Activated T-helper 1 cell treated with anti-CD3 and anti-CD28 coated beads, Interleukin-12 subunit alpha, Interleukin-12 subunit beta, Interleukin-2, Interleukin-4 antibody, amounts not matched to agents 30 ng/mL and 10 ng/mL and 1 ng/mL, durations not matched to agents 14 hours and 24 hours and 36 hours (primary cell): ENCODE measurements at regions of chr5 and their contacts with region 1.

Region 1: GRCh38 chr5:51651889-51652288 is 268.6 kb downstream of the ISL1 start:
- DNase-seq: no peak
- H3K4me3 Mint-ChIP-seq: no peak overlapping the region
- H3K27ac Mint-ChIP-seq: no peak overlapping the region
- H3K4me1 Mint-ChIP-seq: no peaks in the 10 kb centered on the region
- H3K27me3 Mint-ChIP-seq: no peaks in the 10 kb centered on the region

Region 2: DNA sequence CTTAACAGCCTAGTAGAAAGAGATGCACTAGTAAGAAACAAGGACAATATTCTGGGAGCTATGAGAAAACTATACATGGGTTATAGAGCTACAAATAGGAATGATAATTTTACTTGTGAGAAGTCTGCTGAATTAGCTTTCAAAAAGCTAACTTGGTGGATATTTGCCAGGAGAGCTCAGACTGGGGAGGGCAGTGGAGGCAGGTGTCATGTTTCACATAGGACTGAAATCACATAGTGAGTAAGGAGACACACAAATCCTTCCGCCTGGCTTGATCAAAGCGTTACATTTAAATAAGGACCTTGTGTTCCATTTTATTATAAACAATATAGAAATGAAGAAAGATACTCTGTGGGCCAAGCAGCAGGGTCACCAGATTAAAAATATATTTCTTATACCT is 33.7 kb before region 1 on chr5:
- intact Hi-C with region 1: loop called (anchors 1 kb)
- DNase-seq: no peak
- H3K4me3 Mint-ChIP-seq: no peak overlapping the region
- H3K27ac Mint-ChIP-seq: no peak overlapping the region
- H3K4me1 Mint-ChIP-seq: no peaks in the 10 kb centered on the region
- H3K27me3 Mint-ChIP-seq: no peaks in the 10 kb centered on the region